ENCODE measurements at regions of chr10 and their contacts with region 1.

Region 1: DNA sequence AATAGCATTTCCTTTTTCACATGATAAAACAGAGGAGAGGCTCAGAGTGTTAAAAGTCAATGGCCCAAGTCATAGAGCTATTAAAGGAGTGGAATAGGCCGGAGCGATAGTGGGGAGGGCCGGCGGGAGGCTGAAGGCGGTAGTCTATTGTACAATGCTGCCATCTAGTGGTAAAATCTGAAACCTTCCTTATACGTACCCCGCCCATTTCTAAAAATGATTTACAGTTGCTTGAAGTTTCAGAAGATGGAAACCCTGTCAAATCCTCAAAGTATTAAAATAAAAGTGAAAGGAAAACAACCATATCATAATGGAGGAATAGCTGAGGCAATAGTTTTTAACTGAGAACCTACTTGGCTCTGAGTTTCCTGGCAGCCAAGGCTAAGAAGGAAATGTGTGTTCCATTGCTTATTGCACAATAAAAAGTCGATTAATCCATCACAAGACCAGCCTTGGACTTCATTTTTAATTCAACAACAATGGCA is 209.1 kb downstream of the CCSER2 start:
- DNase-seq: peak in 1 of 2 donors; percentile 72
- H3K4me3 ChIP-seq: no peak overlapping the region
- H3K27ac ChIP-seq: no peak overlapping the region
- H3K4me1 ChIP-seq: peaks cover 0 to 6% of the 10 kb centered on the region in 2 donors
- H3K27me3 ChIP-seq: no peaks in the 10 kb centered on the region
- CTCF ChIP-seq: peak; percentile 77 to 86 (median 78)

Region 2: DNA sequence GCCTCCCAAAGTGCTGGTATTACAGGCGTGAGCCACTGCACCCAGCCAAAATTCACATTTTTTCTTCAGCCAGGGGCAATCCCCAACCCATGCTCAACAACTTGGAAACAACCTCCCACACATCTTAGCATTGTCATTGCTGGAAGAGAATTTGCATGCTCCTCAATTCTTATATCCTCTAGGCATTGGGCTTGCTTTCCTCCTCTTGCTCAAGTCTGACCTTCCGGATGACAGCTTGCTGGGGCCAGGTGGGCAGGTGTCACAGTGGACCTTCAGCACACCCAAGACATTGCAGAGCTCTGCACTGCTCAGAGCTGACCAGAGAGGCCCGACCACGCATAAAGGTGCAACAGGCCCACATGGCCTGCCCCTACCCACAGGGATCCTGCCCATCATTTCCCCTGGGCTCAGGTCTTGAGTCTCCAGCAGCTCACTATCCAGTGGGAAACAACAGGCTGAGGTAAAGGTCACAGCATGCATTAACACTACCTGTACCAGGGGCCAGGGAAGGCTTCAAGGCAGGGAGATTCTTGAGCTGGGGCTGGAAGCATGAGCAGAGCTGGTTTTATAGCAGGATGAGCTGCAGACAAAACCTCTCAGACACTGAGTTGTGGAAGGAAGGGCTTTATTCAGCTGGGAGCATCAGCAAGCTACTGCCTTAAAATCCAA is 370.7 kb before region 1 on chr10:
- intact Hi-C with region 1: loop called (anchors 10 kb)
- DNase-seq: no peak
- H3K4me3 ChIP-seq: no peak overlapping the region
- H3K27ac ChIP-seq: no peak overlapping the region
- H3K4me1 ChIP-seq: no peaks in the 10 kb centered on the region
- H3K27me3 ChIP-seq: no peaks in the 10 kb centered on the region
- CTCF ChIP-seq: no peak

Region 3: DNA sequence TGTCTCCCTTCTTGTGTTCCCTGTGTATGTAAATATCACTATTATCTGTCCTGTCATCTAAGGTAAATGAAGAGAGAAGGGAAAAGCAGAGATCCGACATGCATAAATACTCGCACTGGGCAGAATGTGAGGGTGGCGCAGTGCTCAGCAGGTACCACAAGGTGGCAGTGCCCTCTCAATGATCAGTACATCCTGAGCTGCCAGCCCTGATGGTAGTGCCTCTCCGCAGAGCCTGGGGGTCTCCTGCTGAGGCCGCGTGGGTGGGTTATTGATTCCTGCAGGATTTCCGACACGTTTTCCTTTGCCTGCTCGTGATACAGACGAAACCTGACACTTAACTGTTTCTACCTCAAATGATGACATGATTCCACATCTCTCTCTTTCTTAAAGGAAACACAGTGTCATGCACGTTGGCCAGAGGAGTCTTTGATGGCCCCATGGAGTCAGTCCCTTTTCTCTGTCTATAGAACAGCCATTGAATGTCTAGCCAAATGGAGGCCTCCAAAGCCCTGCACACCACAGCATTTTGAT is 272.8 kb before region 1 on chr10:
- intact Hi-C with region 1: loop called (anchors 1 kb)
- DNase-seq: peak in 1 of 2 donors; percentile 76
- H3K4me3 ChIP-seq: no peak overlapping the region
- H3K27ac ChIP-seq: no peak overlapping the region
- H3K4me1 ChIP-seq: no peaks in the 10 kb centered on the region
- H3K27me3 ChIP-seq: peaks cover 4% of the 10 kb centered on the region
- CTCF ChIP-seq: peak; percentile 76 to 95 (median 92)

Region 4: GRCh38 chr10:84375011-84375410 is 162.5 kb before region 1 on chr10:
- intact Hi-C with region 1: loop called (anchors 1 kb)
- DNase-seq: peak in 1 of 2 donors; percentile 63
- H3K4me3 ChIP-seq: no peak overlapping the region
- H3K27ac ChIP-seq: no peak overlapping the region
- H3K4me1 ChIP-seq: no peaks in the 10 kb centered on the region
- H3K27me3 ChIP-seq: no peaks in the 10 kb centered on the region
- CTCF ChIP-seq: peak; percentile 46 to 76 (median 48)

Region 5: GRCh38 chr10:84429926-84430520 is 107.5 kb before region 1 on chr10:
- intact Hi-C with region 1: loop called (anchors 5 kb)
- DNase-seq: peak in 1 of 2 donors; percentile 76
- H3K4me3 ChIP-seq: no peak overlapping the region
- H3K27ac ChIP-seq: no peak overlapping the region
- H3K4me1 ChIP-seq: peaks cover 0 to 27% of the 10 kb centered on the region in 2 donors
- H3K27me3 ChIP-seq: no peaks in the 10 kb centered on the region
- CTCF ChIP-seq: peak; percentile 31 to 57 (median 55)

Region 6: GRCh38 chr10:86376852-86377796 is 1839.6 kb after region 1 on chr10:
- intact Hi-C with region 1: loop called (anchors 5 kb)
- DNase-seq: peak in 1 of 2 donors; percentile 80
- H3K4me3 ChIP-seq: peak overlapping the region in 1 of 2 donors; percentile 49
- H3K27ac ChIP-seq: no peak overlapping the region
- H3K4me1 ChIP-seq: peaks cover 3 to 6% of the 10 kb centered on the region in 2 donors
- H3K27me3 ChIP-seq: peaks cover 5% of the 10 kb centered on the region
- CTCF ChIP-seq: peak; percentile 81 to 98 (median 96)

Measured in ascending aorta (tissue), 2 donors.